ENCODE measurements at regions of chr10 and their contacts with region 1.

Region 1: GRCh38 chr10:44959247-44960087 is at the start of gene RASSF4:
- DNase-seq: peak; percentile 83 to 95 (median 89)
- ATAC-seq: peak; percentile 99
- H3K4me3 ChIP-seq: peak within 1 kb of the TSS; percentile 79
- H3K4me3 Mint-ChIP-seq: peak within 1 kb of the TSS; percentile 81 to 93 (median 88)
- H3K27ac ChIP-seq: peak within 1 kb of the TSS; percentile 68
- H3K27ac Mint-ChIP-seq: peak within 1 kb of the TSS; percentile 65 to 87 (median 80)
- H3K4me1 ChIP-seq: peaks cover 7 to 13% of the 10 kb centered on the region in 2 donors
- H3K4me1 Mint-ChIP-seq: peaks cover 16 to 52% (median 37%) of the 10 kb centered on the region in 7 donors
- H3K27me3 ChIP-seq: no peaks in the 10 kb centered on the region
- H3K27me3 Mint-ChIP-seq: no peaks in the 10 kb centered on the region
- total RNA-seq, gene RASSF4: 1.9 to 53.4 (median 3.0) TPM

Region 2: GRCh38 chr10:44878706-44879530 is 80.5 kb before region 1 on chr10:
- CTCF ChIA-PET with region 1: no interaction called
- POLR2A ChIA-PET with region 1: interaction called, 3 read pairs
- intact Hi-C with region 1: loop called in 1 of 2 experiments (anchors 1 kb)
- DNase-seq: peak; percentile 63 to 85 (median 81)
- ATAC-seq: peak; percentile 83
- H3K4me3 ChIP-seq: peak overlapping the region; percentile 60
- H3K4me3 Mint-ChIP-seq: peak overlapping the region; percentile 81 to 99 (median 93)
- H3K27ac ChIP-seq: peak overlapping the region; percentile 39
- H3K27ac Mint-ChIP-seq: peak overlapping the region; percentile 56 to 93 (median 88)
- H3K4me1 ChIP-seq: peaks cover 0 to 10% of the 10 kb centered on the region in 2 donors
- H3K4me1 Mint-ChIP-seq: peaks cover 5 to 19% (median 16%) of the 10 kb centered on the region in 7 donors
- H3K27me3 ChIP-seq: no peaks in the 10 kb centered on the region
- H3K27me3 Mint-ChIP-seq: peaks cover 0 to 16% (median 0%) of the 10 kb centered on the region in 5 donors

Region 3: DNA sequence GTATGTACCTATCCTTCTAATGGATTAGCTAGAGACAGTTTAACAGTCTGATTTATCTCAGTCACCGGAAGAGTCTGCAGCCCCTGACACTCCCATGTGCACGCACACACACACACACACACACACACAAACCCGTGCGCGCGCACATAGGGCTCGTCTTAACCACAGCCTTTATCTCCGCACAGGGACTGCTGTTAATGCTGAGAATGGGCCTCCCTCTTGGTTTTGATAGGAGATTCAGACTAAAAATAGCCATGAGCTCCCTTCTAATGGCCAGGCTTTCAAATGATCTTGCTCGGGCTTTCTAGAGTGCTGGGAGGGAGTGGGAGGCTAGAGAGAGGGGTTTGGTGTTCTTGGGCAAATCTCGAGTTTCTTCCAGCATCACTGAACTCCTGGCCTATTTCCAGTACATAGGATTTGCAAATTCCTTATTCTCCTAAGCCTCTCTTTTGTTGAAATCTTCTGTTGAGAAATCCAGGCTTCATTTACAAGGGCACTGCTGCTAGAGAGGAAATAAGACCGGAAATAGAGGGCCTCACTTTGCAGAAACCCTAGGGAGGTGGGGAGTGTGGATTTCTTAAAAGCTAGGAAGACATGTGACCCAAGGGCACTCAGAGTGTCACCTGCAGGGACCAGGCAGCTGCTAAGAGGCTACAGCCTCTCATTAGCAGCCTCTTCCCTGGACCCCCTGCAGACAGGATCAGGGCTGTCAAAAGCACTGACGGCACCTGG is 46.0 kb before region 1 on chr10:
- CTCF ChIA-PET with region 1: no interaction called
- POLR2A ChIA-PET with region 1: no interaction called
- intact Hi-C with region 1: loop called in 1 of 2 experiments (anchors 1 kb)
- DNase-seq: peak in 8 of 9 donors; percentile 19 to 75 (median 58)
- ATAC-seq: peak; percentile 83
- H3K4me3 ChIP-seq: no peak overlapping the region
- H3K4me3 Mint-ChIP-seq: peak overlapping the region; percentile 64 to 83 (median 76)
- H3K27ac ChIP-seq: no peak overlapping the region
- H3K27ac Mint-ChIP-seq: peak overlapping the region; percentile 77 to 90 (median 87)
- H3K4me1 ChIP-seq: peaks cover 0 to 21% of the 10 kb centered on the region in 2 donors
- H3K4me1 Mint-ChIP-seq: peaks cover 12 to 28% (median 23%) of the 10 kb centered on the region in 7 donors
- H3K27me3 ChIP-seq: no peaks in the 10 kb centered on the region
- H3K27me3 Mint-ChIP-seq: peaks cover 0 to 13% (median 5%) of the 10 kb centered on the region in 5 donors

Region 4: DNA sequence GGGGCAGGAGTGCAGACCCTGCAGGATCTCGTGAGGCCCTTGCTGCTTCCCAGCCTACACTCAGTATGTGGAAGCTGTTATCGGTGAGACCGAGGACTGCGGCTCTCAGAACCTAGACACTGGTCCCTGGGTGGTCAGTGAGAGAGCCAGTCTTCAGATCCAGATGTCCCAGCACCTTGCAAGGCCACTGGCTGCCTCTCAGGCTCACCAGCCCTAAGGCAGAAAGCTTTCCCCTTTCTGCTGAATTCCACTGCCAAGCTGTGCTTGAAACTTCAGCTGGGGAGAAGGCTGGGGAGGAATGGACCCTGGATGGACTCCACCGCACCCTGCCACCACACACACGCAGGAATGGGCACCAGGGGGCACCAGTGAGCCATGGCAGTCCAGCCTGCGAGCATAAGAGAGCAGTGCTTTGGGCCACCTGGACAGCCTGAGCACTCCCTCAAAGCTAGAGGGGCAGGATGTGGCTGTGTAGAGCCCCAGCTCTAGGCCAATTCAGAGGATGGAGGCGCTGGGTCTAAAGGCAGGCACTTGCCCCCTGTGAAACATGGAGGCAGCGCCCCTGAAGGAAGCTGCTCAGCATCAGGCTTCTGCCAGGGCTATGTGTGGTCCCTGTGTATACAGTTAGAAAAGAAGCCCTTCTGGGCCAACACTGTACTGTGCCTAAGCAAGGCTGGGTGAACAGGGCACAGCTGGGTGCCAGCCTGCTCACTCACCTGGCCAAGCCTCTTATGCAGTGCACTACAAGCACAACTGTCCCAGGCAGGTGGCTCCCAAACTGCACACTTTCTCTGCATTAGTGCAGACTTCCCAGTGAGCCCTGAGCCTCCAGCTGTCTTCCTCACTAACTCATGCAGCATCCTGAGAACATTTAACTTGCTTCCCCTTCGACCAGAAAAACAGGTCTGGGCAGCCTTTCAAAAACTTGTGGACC is 26.7 kb before region 1 on chr10:
- CTCF ChIA-PET with region 1: no interaction called
- POLR2A ChIA-PET with region 1: no interaction called
- intact Hi-C with region 1: loop called in 1 of 2 experiments (anchors 2 kb)
- DNase-seq: peak; percentile 55 to 89 (median 72)
- ATAC-seq: peak; percentile 94
- H3K4me3 ChIP-seq: no peak overlapping the region
- H3K4me3 Mint-ChIP-seq: no peak overlapping the region
- H3K27ac ChIP-seq: no peak overlapping the region
- H3K27ac Mint-ChIP-seq: no peak overlapping the region
- H3K4me1 ChIP-seq: peaks cover 0 to 4% of the 10 kb centered on the region in 2 donors
- H3K4me1 Mint-ChIP-seq: peaks cover 7 to 16% (median 11%) of the 10 kb centered on the region in 7 donors
- H3K27me3 ChIP-seq: no peaks in the 10 kb centered on the region
- H3K27me3 Mint-ChIP-seq: peaks cover 0 to 6% (median 4%) of the 10 kb centered on the region in 5 donors

Region 5: GRCh38 chr10:44974628-44975431 is 15.4 kb after region 1 on chr10:
- CTCF ChIA-PET with region 1: interaction called, 4 read pairs
- POLR2A ChIA-PET with region 1: interaction called, 4 read pairs
- intact Hi-C with region 1: loop called (anchors 1 kb)
- DNase-seq: peak; percentile 26 to 83 (median 68)
- ATAC-seq: peak; percentile 93
- H3K4me3 ChIP-seq: peak overlapping the region; percentile 52
- H3K4me3 Mint-ChIP-seq: peak overlapping the region; percentile 63 to 81 (median 72)
- H3K27ac ChIP-seq: no peak overlapping the region
- H3K27ac Mint-ChIP-seq: peak overlapping the region in 5 of 9 donors; percentile 4 to 83 (median 31)
- H3K4me1 ChIP-seq: peaks cover 10 to 11% of the 10 kb centered on the region in 2 donors
- H3K4me1 Mint-ChIP-seq: peaks cover 0 to 39% (median 22%) of the 10 kb centered on the region in 7 donors
- H3K27me3 ChIP-seq: no peaks in the 10 kb centered on the region
- H3K27me3 Mint-ChIP-seq: no peaks in the 10 kb centered on the region

Region 6: GRCh38 chr10:45000752-45001380 is 41.4 kb after region 1 on chr10 and contains the start of gene ZNF22:
- CTCF ChIA-PET with region 1: no interaction called
- POLR2A ChIA-PET with region 1: interaction called, 5 read pairs
- intact Hi-C with region 1: loop called (anchors 1 to 2 kb)
- DNase-seq: peak; percentile 52 to 77 (median 71)
- ATAC-seq: peak; percentile 88
- H3K4me3 ChIP-seq: peak within 1 kb of the TSS; percentile 81
- H3K4me3 Mint-ChIP-seq: peak within 1 kb of the TSS; percentile 77 to 96 (median 93)
- H3K27ac ChIP-seq: peak within 1 kb of the TSS; percentile 68
- H3K27ac Mint-ChIP-seq: peak within 1 kb of the TSS; percentile 78 to 94 (median 91)
- H3K4me1 ChIP-seq: peaks cover 15 to 16% of the 10 kb centered on the region in 2 donors
- H3K4me1 Mint-ChIP-seq: peaks cover 16 to 52% (median 39%) of the 10 kb centered on the region in 7 donors
- H3K27me3 ChIP-seq: no peaks in the 10 kb centered on the region
- H3K27me3 Mint-ChIP-seq: peaks cover 0 to 8% (median 0%) of the 10 kb centered on the region in 5 donors
- total RNA-seq, gene ZNF22: 13.1 to 33.6 (median 27.4) TPM

Measured in naive thymus-derived CD4-positive, alpha-beta T cell (primary cell).